B cell (primary cell): ENCODE measurements at regions of chr6 and their contacts with region 1.

Region 1: DNA sequence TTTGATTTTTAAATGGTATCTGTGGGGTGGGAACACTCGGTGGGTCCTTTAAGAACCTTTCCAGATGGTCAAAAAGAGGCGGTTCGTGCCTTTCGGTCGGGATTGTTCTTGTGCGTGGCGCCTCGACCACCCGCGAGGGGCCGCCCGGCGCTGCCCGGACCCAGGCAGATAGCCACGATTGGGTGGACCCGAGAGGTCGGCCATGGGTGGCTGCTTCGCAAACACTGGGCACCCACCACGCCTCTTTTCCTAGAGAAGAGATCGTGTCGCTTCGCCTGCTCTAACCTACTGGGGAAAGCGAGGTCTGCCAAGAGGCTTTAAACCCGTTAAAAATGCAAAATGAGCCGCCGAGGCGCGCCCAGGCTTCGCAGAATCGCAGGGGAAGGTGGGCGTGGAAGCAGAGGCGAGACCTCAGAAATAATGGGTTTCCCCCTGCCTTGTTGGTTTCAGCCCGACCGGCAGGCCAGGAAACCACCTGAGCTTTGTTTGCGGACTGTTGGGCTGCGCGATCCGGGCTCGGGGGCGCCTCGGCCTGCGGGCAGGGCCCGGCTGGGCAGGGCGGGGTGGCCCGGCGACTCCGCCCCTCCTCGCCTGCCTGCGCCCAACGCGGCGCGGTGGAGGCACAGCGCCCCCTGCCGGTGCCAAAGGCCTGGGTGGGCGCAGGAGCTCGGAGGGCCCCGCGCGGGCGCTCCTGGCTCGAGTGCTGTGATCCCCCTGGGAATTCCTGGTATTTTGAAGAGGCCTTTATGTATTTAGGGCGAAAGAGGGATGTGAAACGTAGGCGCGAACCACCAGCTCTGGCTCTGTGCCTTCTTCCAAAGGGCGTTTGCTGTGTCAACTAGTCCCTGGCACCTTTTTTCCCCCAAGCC is 1.6 kb downstream of the MARCKS start:
- DNase-seq: peak; percentile 98
- ATAC-seq: peak; percentile 76
- H3K4me3 ChIP-seq: peak overlapping the region; percentile 83 to 100 (median 99)
- H3K4me3 Mint-ChIP-seq: peak overlapping the region; percentile 80
- H3K27ac ChIP-seq: peak overlapping the region; percentile 96 to 97
- H3K27ac Mint-ChIP-seq: peak overlapping the region; percentile 85
- H3K4me1 ChIP-seq: peaks cover 18 to 40% of the 10 kb centered on the region in 2 donors
- H3K4me1 Mint-ChIP-seq: peaks cover 22% of the 10 kb centered on the region
- H3K27me3 ChIP-seq: no peaks in the 10 kb centered on the region
- H3K27me3 Mint-ChIP-seq: no peaks in the 10 kb centered on the region
- CTCF ChIP-seq: peak; percentile 94

Region 2: GRCh38 chr6:112087136-112087911 is 1771.4 kb before region 1 on chr6 and contains the starts of genes FAM229B and TUBE1:
- CTCF ChIA-PET with region 1: interaction called, 9 read pairs
- POLR2A ChIA-PET with region 1: no interaction called
- intact Hi-C with region 1: loop called (anchors 1 kb)
- DNase-seq: peak; percentile 96
- ATAC-seq: peak; percentile 97
- H3K4me3 ChIP-seq: peak within 1 kb of the TSS; percentile 69 to 88 (median 83)
- H3K4me3 Mint-ChIP-seq: no peak within 1 kb of the TSS
- H3K27ac ChIP-seq: peak within 1 kb of the TSS; percentile 84
- H3K27ac Mint-ChIP-seq: no peak within 1 kb of the TSS
- H3K4me1 ChIP-seq: peaks cover 7 to 8% of the 10 kb centered on the region in 2 donors
- H3K4me1 Mint-ChIP-seq: no peaks in the 10 kb centered on the region
- H3K27me3 ChIP-seq: peaks cover 0 to 14% (median 5%) of the 10 kb centered on the region in 4 experiments
- H3K27me3 Mint-ChIP-seq: peaks cover 15% of the 10 kb centered on the region
- CTCF ChIP-seq: no peak
- total RNA-seq, gene FAM229B: 4.0 and 4.4 TPM in 2 replicates
- total RNA-seq, gene TUBE1: 24.5 and 26.7 TPM in 2 replicates

Region 3: GRCh38 chr6:112311950-112312547 is 1546.7 kb before region 1 on chr6:
- CTCF ChIA-PET with region 1: no interaction called
- POLR2A ChIA-PET with region 1: no interaction called
- intact Hi-C with region 1: loop called (anchors 5 kb)
- DNase-seq: peak; percentile 25
- ATAC-seq: no peak
- H3K4me3 ChIP-seq: no peak overlapping the region
- H3K4me3 Mint-ChIP-seq: no peak overlapping the region
- H3K27ac ChIP-seq: no peak overlapping the region
- H3K27ac Mint-ChIP-seq: no peak overlapping the region
- H3K4me1 ChIP-seq: peaks cover 10 to 11% of the 10 kb centered on the region in 2 donors
- H3K4me1 Mint-ChIP-seq: peaks cover 14% of the 10 kb centered on the region
- H3K27me3 ChIP-seq: no peaks in the 10 kb centered on the region
- H3K27me3 Mint-ChIP-seq: no peaks in the 10 kb centered on the region
- CTCF ChIP-seq: peak; percentile 79

Region 4: GRCh38 chr6:113632220-113632864 is 226.4 kb before region 1 on chr6:
- CTCF ChIA-PET with region 1: interaction called, 39 read pairs
- POLR2A ChIA-PET with region 1: interaction called, 6 read pairs
- intact Hi-C with region 1: loop called (anchors 1 kb)
- DNase-seq: peak; percentile 52
- ATAC-seq: peak; percentile 16
- H3K4me3 ChIP-seq: peak overlapping the region in 2 of 5 experiments; percentile 7 to 42
- H3K4me3 Mint-ChIP-seq: peak overlapping the region; percentile 82
- H3K27ac ChIP-seq: peak overlapping the region; percentile 98 to 100
- H3K27ac Mint-ChIP-seq: peak overlapping the region; percentile 93
- H3K4me1 ChIP-seq: peaks cover 87 to 88% of the 10 kb centered on the region in 2 donors
- H3K4me1 Mint-ChIP-seq: peaks cover 77% of the 10 kb centered on the region
- H3K27me3 ChIP-seq: no peaks in the 10 kb centered on the region
- H3K27me3 Mint-ChIP-seq: no peaks in the 10 kb centered on the region
- CTCF ChIP-seq: no peak

Region 5: DNA sequence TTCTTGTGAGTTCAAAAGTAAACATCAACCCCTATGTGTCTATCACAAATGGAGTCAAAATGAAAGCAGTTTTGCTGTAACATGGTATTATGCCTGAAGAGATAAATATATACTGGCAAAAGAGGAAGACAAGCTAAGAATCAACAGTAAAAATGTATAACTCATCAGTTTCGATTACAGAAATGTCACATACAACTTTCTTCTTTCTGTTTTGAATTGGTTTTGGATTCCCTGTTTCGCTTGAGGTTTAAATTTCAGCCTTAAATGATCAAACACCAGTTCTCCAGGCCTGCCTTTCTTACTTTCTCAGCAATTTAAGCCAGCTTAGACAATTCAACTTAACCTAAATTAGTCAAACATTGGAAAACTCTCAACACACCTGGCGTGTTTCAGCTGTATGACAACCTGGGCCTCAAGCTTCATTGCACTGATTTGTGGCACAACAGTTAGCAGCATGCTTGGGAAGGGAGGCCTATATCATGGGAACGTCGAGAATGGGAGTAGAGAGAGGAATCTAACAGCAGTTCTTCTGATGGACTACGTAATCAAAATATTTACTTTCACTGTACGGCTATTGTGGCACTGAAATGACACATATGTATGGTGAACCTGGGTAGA is 53.4 kb before region 1 on chr6:
- CTCF ChIA-PET with region 1: interaction called, 11 read pairs
- POLR2A ChIA-PET with region 1: interaction called, 8 read pairs
- intact Hi-C with region 1: loop called (anchors 1 kb)
- DNase-seq: peak; percentile 63
- ATAC-seq: peak; percentile 38
- H3K4me3 ChIP-seq: peak overlapping the region in 2 of 5 experiments; percentile 13 to 45
- H3K4me3 Mint-ChIP-seq: peak overlapping the region; percentile 64
- H3K27ac ChIP-seq: peak overlapping the region; percentile 46 to 50
- H3K27ac Mint-ChIP-seq: peak overlapping the region; percentile 81
- H3K4me1 ChIP-seq: peaks cover 41 to 47% of the 10 kb centered on the region in 2 donors
- H3K4me1 Mint-ChIP-seq: peaks cover 51% of the 10 kb centered on the region
- H3K27me3 ChIP-seq: no peaks in the 10 kb centered on the region
- H3K27me3 Mint-ChIP-seq: no peaks in the 10 kb centered on the region
- CTCF ChIP-seq: no peak

Region 6: GRCh38 chr6:113970805-113971676 is 112.3 kb after region 1 on chr6 and contains the start of gene HDAC2:
- CTCF ChIA-PET with region 1: interaction called, 7 read pairs
- POLR2A ChIA-PET with region 1: interaction called, 3 read pairs
- intact Hi-C with region 1: loop called (anchors 1 kb)
- DNase-seq: peak; percentile 94
- ATAC-seq: peak; percentile 83
- H3K4me3 ChIP-seq: peak within 1 kb of the TSS; percentile 53 to 99 (median 86)
- H3K4me3 Mint-ChIP-seq: peak within 1 kb of the TSS; percentile 100
- H3K27ac ChIP-seq: peak within 1 kb of the TSS; percentile 91 to 92
- H3K27ac Mint-ChIP-seq: peak within 1 kb of the TSS; percentile 99
- H3K4me1 ChIP-seq: peaks cover 19 to 24% of the 10 kb centered on the region in 2 donors
- H3K4me1 Mint-ChIP-seq: peaks cover 43% of the 10 kb centered on the region
- H3K27me3 ChIP-seq: no peaks in the 10 kb centered on the region
- H3K27me3 Mint-ChIP-seq: no peaks in the 10 kb centered on the region
- CTCF ChIP-seq: peak; percentile 18
- total RNA-seq, gene HDAC2: 52.7 and 58.3 TPM in 2 replicates